ENCODE measurements at regions of chr15 and their contacts with region 1.

Region 1: DNA sequence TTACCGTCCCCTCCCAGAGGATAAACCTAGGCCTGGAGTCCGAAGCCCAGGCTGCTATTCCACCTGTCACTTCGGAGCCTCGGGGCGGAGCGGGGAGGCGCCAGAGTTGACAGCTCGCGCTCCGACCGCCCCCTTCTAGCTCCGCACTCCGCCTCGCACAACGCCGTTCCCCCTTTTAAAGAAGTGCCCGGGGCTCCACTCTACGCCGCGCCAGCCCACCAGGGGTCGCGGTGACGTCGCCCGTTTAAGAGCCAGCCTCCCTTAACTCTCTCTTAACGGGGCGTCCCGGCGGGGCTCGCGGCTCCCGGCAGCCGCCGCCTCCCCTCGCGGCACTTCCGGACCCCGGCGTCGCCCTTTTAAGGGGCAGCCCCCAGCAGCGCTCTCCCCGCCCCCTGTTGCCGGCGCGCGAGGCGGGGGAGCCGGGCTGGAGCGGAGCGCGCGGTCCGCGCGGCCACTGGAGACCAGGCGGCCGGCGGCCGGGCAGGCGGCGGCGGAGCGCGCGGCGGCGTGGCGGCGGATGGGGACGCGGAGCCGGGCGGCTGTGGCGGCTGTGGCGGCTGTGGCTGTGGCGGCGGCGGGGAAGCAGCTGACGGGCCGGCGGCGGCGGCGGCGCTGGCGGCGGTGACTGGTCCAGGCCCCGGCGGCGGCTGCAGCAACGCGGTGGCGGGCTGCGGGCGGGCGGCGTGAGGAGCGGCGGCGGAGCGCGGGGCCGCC is at the start of gene INAFM2:
- DNase-seq: peak; percentile 79 to 89
- ATAC-seq: peak; percentile 81 to 85
- H3K4me3 ChIP-seq: peak within 1 kb of the TSS; percentile 63 to 84 (median 79)
- H3K27ac ChIP-seq: peak within 1 kb of the TSS; percentile 70 to 88 (median 86)
- H3K4me1 ChIP-seq: peaks cover 25 to 26% of the 10 kb centered on the region in 2 donors
- H3K27me3 ChIP-seq: no peaks in the 10 kb centered on the region
- CTCF ChIP-seq: peak; percentile 53 to 88 (median 76)
- POLR2A ChIP-seq: peak; percentile 75 to 78
- total RNA-seq, gene INAFM2: 17.2 to 28.1 (median 17.7) TPM

Region 2: GRCh38 chr15:40204100-40204499 is 119.3 kb before region 1 on chr15:
- in situ Hi-C with region 1: no loop called
- intact Hi-C with region 1: no loop called
- DNase-seq: no peak
- ATAC-seq: no peak
- H3K4me3 ChIP-seq: no peak overlapping the region
- H3K27ac ChIP-seq: no peak overlapping the region
- H3K4me1 ChIP-seq: no peaks in the 10 kb centered on the region
- H3K27me3 ChIP-seq: no peaks in the 10 kb centered on the region
- CTCF ChIP-seq: no peak
- POLR2A ChIP-seq: no peak

Region 3: DNA sequence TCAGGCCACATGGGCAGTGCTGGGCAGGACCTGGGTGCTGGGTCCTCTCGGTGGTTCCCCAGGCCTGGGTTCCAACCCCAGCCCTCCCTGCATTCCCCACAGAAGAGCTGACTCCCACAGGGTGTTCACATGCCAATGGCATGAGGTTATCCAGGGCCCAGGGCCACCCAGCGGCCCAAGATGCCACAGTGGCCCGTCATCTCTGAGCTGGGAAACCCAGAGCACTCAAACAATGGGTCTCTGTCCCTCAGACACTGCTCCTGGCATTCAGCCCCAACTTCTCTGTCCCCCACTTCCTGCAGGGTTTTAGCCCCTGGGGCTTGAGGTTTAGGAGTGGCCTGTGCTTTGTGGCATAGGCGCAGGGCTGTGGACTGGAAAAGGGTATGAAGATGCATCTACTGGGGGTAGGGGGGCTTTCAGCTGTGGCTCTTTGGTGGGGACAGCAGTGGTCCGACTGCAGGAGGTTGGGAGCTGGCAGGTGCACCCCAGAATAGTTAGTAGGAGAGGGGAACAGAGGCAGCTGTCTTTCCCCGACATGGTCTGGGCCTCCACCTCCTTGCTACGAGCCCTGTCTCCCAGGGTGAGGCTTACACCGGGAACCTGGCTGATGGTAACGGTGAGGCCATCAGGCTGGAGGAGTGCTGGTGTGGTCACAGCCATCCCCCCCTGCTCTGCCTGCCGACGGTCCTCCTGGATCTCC is 15.7 kb after region 1 on chr15:
- in situ Hi-C with region 1: no loop called
- intact Hi-C with region 1: loop called (anchors 1 kb)
- DNase-seq: peak in 1 of 2 donors; percentile 67
- ATAC-seq: peak; percentile 23 to 24
- H3K4me3 ChIP-seq: peak overlapping the region; percentile 54 to 70 (median 68)
- H3K27ac ChIP-seq: peak overlapping the region; percentile 98 to 100 (median 99)
- H3K4me1 ChIP-seq: peaks cover 68 to 79% of the 10 kb centered on the region in 2 donors
- H3K27me3 ChIP-seq: no peaks in the 10 kb centered on the region
- CTCF ChIP-seq: no peak
- POLR2A ChIP-seq: no peak

Region 4: DNA sequence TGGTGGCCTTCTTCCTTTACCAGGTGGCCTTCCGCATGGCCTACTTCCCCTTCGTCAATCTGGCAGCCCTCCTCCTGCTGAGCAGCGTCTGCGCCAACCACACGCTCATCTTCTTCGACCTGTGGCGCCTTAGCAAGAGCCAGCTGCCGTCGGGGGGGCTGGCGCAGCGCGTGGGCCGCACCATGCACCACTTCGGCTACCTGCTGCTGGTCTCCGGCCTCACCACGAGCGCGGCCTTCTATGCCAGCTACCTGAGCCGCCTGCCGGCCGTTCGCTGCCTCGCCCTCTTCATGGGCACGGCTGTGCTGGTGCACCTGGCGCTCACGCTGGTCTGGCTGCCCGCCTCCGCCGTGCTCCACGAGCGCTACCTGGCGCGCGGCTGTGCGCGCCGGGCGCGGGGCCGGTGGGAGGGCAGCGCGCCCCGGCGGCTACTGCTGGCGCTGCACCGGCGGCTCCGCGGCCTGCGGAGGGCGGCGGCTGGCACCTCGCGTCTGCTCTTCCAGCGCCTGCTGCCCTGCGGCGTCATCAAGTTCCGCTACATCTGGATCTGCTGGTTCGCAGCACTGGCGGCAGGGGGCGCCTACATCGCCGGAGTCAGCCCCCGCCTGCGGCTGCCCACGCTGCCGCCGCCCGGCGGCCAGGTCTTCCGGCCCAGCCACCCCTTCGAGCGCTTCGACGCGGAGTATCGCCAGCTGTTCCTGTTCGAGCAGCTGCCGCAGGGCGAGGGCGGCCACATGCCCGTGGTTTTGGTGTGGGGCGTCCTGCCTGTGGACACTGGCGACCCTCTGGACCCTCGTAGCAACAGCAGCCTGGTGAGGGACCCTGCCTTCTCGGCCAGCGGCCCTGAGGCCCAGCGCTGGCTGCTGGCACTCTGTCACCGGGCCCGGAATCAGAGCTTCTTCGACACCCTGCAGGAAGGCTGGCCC is 44.6 kb after region 1 on chr15:
- in situ Hi-C with region 1: no loop called
- intact Hi-C with region 1: loop called (anchors 1 kb)
- DNase-seq: peak; percentile 64 to 86
- ATAC-seq: peak; percentile 70 to 78
- H3K4me3 ChIP-seq: peak overlapping the region; percentile 35 to 51 (median 40)
- H3K27ac ChIP-seq: peak overlapping the region; percentile 77 to 92 (median 84)
- H3K4me1 ChIP-seq: peaks cover 18 to 20% of the 10 kb centered on the region in 2 donors
- H3K27me3 ChIP-seq: no peaks in the 10 kb centered on the region
- CTCF ChIP-seq: peak; percentile 81 to 97 (median 93)
- POLR2A ChIP-seq: no peak

Region 5: DNA sequence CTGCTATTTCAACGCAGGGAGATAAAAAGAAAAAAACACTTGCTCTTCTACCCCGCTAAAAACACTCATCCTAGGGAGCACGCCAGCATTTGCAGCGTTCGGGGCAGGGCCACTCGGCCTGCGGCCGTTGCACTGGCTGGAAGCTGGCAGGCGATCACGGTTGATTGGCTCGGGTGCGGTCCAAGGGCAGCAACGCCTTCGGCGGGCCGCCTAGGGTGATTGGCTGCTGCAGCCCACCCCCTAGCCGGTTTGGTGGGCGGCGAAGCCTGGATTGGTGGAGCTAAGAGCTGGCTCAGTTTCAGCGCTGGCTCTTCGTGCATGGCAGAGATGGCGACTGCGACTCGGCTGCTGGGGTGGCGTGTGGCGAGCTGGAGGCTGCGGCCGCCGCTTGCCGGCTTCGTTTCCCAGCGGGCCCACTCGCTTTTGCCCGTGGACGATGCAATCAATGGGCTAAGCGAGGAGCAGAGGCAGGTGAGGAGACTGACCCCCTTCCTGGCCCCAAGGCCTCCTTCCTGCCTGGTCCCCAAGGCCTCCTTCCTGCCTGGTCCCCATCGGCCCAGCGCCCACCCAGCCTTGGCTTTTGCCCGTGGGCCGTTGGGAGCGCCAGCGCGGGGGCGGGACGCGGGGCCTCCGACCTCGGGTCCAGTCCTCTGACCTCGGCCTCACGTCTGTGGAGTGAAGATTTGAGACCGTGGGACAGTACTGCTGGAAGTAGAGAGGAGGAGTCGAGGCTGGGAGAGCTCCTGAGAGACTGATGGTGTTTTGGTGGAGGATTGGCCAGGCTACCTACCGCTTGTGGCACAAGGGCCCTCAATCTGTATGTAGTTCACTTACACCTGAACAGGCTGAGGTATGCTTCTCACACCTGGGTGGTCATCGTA is 82.3 kb after region 1 on chr15 and contains the start of gene IVD:
- in situ Hi-C with region 1: no loop called
- intact Hi-C with region 1: loop called (anchors 5 kb)
- DNase-seq: peak; percentile 90 to 94
- ATAC-seq: peak; percentile 93 to 97
- H3K4me3 ChIP-seq: peak within 1 kb of the TSS; percentile 64 to 87 (median 73)
- H3K27ac ChIP-seq: peak within 1 kb of the TSS; percentile 74 to 81 (median 75)
- H3K4me1 ChIP-seq: peaks cover 8 to 11% of the 10 kb centered on the region in 2 donors
- H3K27me3 ChIP-seq: no peaks in the 10 kb centered on the region
- CTCF ChIP-seq: no peak
- POLR2A ChIP-seq: peak; percentile 41 to 45
- total RNA-seq, gene IVD: 27.4 to 34.1 (median 29.1) TPM